Esophagus squamous epithelium (tissue), 5 donors: ENCODE measurements at regions of chr2 and their contacts with region 1.

Region 1: GRCh38 chr2:152042636-152043615 is 55.9 kb downstream of the CACNB4 start:
- DNase-seq: no peak
- H3K4me3 ChIP-seq: no peak overlapping the region
- H3K27ac ChIP-seq: no peak overlapping the region
- H3K4me1 ChIP-seq: peaks cover 8 to 40% (median 19%) of the 10 kb centered on the region in 3 donors
- H3K27me3 ChIP-seq: no peaks in the 10 kb centered on the region
- CTCF ChIP-seq: no peak
- POLR2A ChIP-seq: no peak

Region 2: GRCh38 chr2:152171436-152172117 is 128.7 kb after region 1 on chr2:
- intact Hi-C with region 1: loop called (anchors 5 kb)
- DNase-seq: no peak
- H3K4me3 ChIP-seq: peak overlapping the region in 1 of 4 donors; percentile 11
- H3K27ac ChIP-seq: peak overlapping the region; percentile 35 to 83 (median 74)
- H3K4me1 ChIP-seq: peaks cover 21 to 87% (median 39%) of the 10 kb centered on the region in 3 donors
- H3K27me3 ChIP-seq: no peaks in the 10 kb centered on the region
- CTCF ChIP-seq: no peak
- POLR2A ChIP-seq: no peak